ENCODE measurements at regions of chr5 and their contacts with region 1.

Region 1: GRCh38 chr5:173293817-173294672 is 34.2 kb downstream of the STC2 start:
- DNase-seq: peak; percentile 19
- H3K4me3 ChIP-seq: peak overlapping the region; percentile 39
- CTCF ChIP-seq: peak; percentile 80

Region 2: GRCh38 chr5:173238312-173239232 is 55.5 kb before region 1 on chr5:
- CTCF ChIA-PET with region 1: no interaction called
- POLR2A ChIA-PET with region 1: no interaction called
- DNase-seq: no peak
- H3K4me3 ChIP-seq: peak overlapping the region; percentile 12; the same call in 1 of the 2 replicates
- CTCF ChIP-seq: no peak

Region 3: GRCh38 chr5:173283318-173284288 is 10.4 kb before region 1 on chr5:
- CTCF ChIA-PET with region 1: interaction called, 27 read pairs
- POLR2A ChIA-PET with region 1: no interaction called
- DNase-seq: no peak
- H3K4me3 ChIP-seq: peak overlapping the region; percentile 42
- CTCF ChIP-seq: peak; percentile 94

Region 4: DNA sequence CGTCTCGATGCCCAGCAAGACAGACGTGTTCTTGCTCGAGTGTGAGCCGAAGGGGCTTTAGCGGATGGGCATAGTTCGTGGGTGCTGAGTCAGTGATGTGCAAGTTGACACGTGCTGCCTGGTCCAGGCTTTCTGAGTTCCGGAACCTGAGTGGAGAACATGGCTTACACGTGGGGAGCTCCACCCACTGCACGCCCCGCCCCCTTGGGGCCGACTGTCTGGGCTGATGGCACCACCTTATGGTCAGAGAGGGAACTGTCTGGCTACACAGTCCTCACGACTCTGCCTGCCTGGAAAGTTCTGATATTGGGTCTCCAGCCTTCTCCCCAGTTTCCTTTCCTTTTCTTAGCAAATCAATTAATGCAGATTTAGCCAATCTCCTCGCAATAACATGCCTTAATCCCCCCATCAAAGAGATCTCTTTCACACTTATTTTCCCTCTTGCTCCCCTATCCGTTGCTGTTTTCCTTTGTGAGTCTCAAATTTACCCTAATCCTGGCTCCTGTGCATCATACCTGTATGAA is 38.0 kb after region 1 on chr5:
- CTCF ChIA-PET with region 1: interaction called, 210 read pairs
- POLR2A ChIA-PET with region 1: interaction called, 9 read pairs
- DNase-seq: no peak
- H3K4me3 ChIP-seq: no peak overlapping the region
- CTCF ChIP-seq: peak; percentile 93

Region 5: GRCh38 chr5:173581408-173582215 is 287.6 kb after region 1 on chr5:
- CTCF ChIA-PET with region 1: interaction called, 137 read pairs
- POLR2A ChIA-PET with region 1: no interaction called
- DNase-seq: no peak
- H3K4me3 ChIP-seq: no peak overlapping the region
- CTCF ChIP-seq: peak; percentile 85